ENCODE measurements at regions of chr1 and their contacts with region 1.

Region 1: GRCh38 chr1:246566128-246566812 is at the starts of genes CNST and TFB2M:
- DNase-seq: peak; percentile 88 to 99
- H3K4me3 ChIP-seq: peak within 1 kb of the TSS; percentile 93 to 98
- H3K27ac ChIP-seq: peak within 1 kb of the TSS; percentile 90 to 98
- H3K4me1 ChIP-seq: peaks cover 11 to 29% of the 10 kb centered on the region in 2 donors
- H3K27me3 ChIP-seq: no peaks in the 10 kb centered on the region
- CTCF ChIP-seq: no peak
- total RNA-seq, gene CNST: 125 TPM
- total RNA-seq, gene TFB2M: 1.6 TPM

Region 2: GRCh38 chr1:244864253-244865027 is 1701.8 kb before region 1 on chr1 and contains the start of gene HNRNPU:
- intact Hi-C with region 1: loop called (anchors 5 kb)
- DNase-seq: peak; percentile 86 to 99
- H3K4me3 ChIP-seq: peak within 1 kb of the TSS; percentile 90 to 100
- H3K27ac ChIP-seq: peak within 1 kb of the TSS; percentile 99 to 100
- H3K4me1 ChIP-seq: peaks cover 11 to 33% of the 10 kb centered on the region in 2 donors
- H3K27me3 ChIP-seq: no peaks in the 10 kb centered on the region
- CTCF ChIP-seq: peak; percentile 18 to 44 (median 41)
- total RNA-seq, gene HNRNPU: 128 TPM

Region 3: GRCh38 chr1:246579818-246580217 is 13.5 kb after region 1 on chr1:
- intact Hi-C with region 1: no loop called
- DNase-seq: no peak
- H3K4me3 ChIP-seq: no peak overlapping the region
- H3K27ac ChIP-seq: no peak overlapping the region
- H3K4me1 ChIP-seq: no peaks in the 10 kb centered on the region
- H3K27me3 ChIP-seq: no peaks in the 10 kb centered on the region
- CTCF ChIP-seq: no peak

Region 4: DNA sequence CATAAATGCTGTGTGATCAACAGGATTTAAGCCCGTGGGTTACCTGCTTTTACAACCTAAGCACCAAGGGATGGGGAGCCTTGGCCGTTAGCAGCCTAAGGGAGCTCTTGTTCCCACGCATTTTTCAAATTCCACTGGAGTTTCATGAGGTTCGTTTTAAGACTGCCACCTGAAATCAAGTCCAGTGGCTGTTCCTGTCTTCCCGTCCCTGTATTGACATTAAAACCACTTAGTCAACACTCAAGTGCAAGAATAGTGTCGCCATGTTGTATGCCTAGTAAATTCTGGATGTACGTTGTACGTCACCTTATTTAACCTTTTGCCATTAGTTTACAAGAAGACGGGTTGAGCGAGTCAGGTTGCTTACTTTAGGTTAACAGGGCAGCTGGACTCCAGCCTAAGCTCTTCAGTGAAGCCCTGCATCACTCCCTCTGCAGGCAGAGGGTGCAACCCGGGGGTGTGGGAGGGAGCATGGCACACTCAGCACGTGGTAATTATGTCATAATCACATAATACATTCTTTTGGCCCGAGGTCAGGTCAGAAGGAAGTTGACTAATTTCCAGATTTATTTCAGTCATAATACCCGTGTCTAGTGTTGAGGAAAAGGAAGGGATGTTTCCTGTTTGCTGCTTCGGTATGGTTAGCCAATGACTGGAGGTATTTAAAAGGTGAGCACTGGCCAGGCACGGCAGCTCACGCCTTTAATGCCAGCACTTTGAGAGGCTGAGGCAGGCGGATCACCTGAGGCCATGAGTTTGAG is 42.5 kb after region 1 on chr1:
- intact Hi-C with region 1: loop called (anchors 5 kb)
- DNase-seq: peak; percentile 22 to 74
- H3K4me3 ChIP-seq: no peak overlapping the region
- H3K27ac ChIP-seq: peak overlapping the region in 1 of 2 donors; percentile 17
- H3K4me1 ChIP-seq: no peaks in the 10 kb centered on the region
- H3K27me3 ChIP-seq: no peaks in the 10 kb centered on the region
- CTCF ChIP-seq: no peak

Region 5: GRCh38 chr1:246699095-246699735 is 132.9 kb after region 1 on chr1:
- intact Hi-C with region 1: loop called (anchors 2 kb)
- DNase-seq: peak; percentile 53 to 94
- H3K4me3 ChIP-seq: peak overlapping the region; percentile 21 to 63
- H3K27ac ChIP-seq: peak overlapping the region in 1 of 2 donors; percentile 4
- H3K4me1 ChIP-seq: no peaks in the 10 kb centered on the region
- H3K27me3 ChIP-seq: no peaks in the 10 kb centered on the region
- CTCF ChIP-seq: peak; percentile 69 to 89 (median 73)

Region 6: GRCh38 chr1:247331172-247331991 is 765.1 kb after region 1 on chr1 and contains the start of gene ZNF496:
- intact Hi-C with region 1: loop called (anchors 5 kb)
- DNase-seq: peak; percentile 35 to 87
- H3K4me3 ChIP-seq: peak within 1 kb of the TSS; percentile 91 to 100
- H3K27ac ChIP-seq: peak within 1 kb of the TSS; percentile 92 to 98
- H3K4me1 ChIP-seq: peaks cover 7% of the 10 kb centered on the region in 2 donors
- H3K27me3 ChIP-seq: no peaks in the 10 kb centered on the region
- CTCF ChIP-seq: no peak
- total RNA-seq, gene ZNF496: 38.5 TPM

Measured in ascending aorta (tissue), 2 donors.